Right ventricle myocardium inferior (tissue), 1 donor: ENCODE measurements at regions of chr1 and their contacts with region 1.

Region 1: DNA sequence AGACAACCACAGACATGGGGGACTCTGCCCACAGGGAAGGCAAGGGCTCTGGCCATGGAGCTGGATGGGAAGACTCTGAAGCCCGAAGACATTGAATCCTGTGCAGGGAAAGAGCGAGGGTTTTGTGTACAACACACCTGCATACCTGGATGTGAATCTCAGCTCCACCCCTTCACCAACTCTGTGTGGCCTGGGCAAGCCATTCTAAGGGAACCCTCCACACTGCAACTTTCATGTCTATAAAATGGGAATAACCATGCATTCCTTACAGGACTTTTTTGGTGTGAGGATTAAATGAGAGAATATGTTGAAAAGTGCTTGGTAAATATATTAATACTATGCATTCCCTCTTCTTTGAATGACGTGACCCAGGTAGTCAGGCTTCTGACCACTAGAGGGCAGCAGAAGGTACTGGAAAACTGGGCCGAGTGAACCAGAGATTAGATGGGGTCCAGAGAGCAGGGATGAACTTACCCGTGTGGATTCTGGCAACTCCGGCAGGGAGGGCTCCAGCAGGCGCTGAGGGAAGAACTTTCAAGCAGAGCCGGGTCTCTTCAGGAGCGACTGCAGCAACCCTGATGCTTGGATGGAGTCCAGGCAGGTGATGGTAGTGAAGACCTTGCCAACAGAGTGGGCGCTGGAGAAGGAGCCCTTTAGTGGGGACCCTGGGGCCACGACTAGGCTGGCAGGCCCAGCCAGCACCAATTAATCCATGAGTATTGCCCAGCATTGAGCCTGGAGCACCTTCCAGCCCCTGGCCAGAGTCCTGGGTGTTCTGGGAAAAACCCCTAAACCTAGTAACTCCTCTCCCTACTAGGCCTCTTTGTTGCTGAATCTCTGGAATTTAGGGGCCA is 834 bp upstream of the ELF3 start:
- DNase-seq: no peak
- ATAC-seq: peak; percentile 73

Region 2: GRCh38 chr1:202023033-202023486 is 13.5 kb after region 1 on chr1:
- intact Hi-C with region 1: no loop called
- DNase-seq: no peak
- ATAC-seq: no peak

Region 3: DNA sequence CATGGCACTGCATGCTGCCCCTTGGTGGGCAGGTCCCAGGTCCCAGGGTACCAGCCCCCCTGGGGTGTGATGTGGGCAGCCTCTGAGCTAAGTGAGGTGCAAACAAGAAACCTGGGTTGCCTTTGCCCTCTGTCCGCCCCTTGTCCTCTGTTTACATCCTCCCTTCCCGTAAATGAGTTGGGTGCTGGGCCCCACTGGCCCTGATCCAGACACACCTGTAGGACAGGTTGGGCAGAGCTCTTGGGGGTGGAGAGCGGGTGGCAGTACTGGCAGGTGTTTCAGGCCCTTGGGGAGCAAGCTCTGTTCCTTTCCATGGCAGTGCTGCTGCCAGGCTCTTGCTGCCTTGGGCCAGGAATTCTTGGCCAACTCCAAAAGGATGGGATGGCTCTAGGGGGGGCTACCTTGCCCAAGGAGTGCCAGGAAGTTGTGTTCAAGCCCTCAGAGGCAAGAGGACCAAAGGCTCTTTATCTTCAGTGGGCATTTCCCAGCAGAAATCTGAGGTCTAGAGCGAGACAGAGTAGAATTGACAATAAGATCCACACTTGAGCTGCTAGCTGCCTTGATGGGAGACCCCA is 36.8 kb after region 1 on chr1:
- intact Hi-C with region 1: no loop called
- DNase-seq: no peak
- ATAC-seq: no peak

Region 4: GRCh38 chr1:202056644-202057461 is 47.3 kb after region 1 on chr1:
- intact Hi-C with region 1: no loop called
- DNase-seq: peak; percentile 76
- ATAC-seq: peak; percentile 91

Region 5: DNA sequence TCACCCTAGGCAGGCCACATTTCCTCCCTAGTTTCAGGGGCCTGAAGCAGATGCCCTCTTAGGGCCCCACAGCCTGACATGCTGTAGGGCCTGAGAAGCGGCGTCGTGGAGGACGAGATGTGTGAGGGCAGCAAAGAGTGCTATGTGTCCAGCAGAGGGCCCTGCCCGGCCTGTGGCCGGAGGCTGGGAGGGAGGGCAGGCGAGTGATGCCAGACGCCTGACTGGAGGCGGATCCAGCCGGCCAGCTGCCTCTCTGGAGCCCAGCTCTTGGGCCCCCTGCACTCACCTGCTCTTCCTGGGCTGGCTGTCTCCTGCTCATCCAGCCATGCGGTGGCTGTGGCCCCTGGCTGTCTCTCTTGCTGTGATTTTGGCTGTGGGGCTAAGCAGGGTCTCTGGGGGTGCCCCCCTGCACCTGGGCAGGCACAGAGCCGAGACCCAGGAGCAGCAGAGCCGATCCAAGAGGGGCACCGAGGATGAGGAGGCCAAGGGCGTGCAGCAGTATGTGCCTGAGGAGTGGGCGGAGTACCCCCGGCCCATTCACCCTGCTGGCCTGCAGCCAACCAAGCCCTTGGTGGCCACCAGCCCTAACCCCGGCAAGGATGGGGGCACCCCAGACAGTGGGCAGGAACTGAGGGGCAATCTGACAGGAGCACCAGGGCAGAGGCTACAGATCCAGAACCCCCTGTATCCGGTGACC is 113.2 kb after region 1 on chr1 and contains the start of gene GPR37L1:
- intact Hi-C with region 1: loop called (anchors 1 kb)
- DNase-seq: no peak
- ATAC-seq: peak; percentile 65
- total RNA-seq, gene GPR37L1: 0.08 TPM

Region 6: GRCh38 chr1:202132031-202132907 is 122.7 kb after region 1 on chr1:
- intact Hi-C with region 1: loop called (anchors 5 kb)
- DNase-seq: peak; percentile 82
- ATAC-seq: peak; percentile 78